CD4-positive, alpha-beta memory T cell (primary cell): ENCODE measurements at regions of chr12 and their contacts with region 1.

Region 1: GRCh38 chr12:76455582-76456345 is 103.8 kb downstream of the OSBPL8 start:
- DNase-seq: peak in 4 of 5 donors; percentile 44 to 56 (median 51)
- H3K4me3 ChIP-seq: no peak overlapping the region
- H3K4me3 Mint-ChIP-seq: no peak overlapping the region
- H3K27ac ChIP-seq: no peak overlapping the region
- H3K27ac Mint-ChIP-seq: peak overlapping the region in 5 of 7 donors; percentile 30 to 88 (median 75)
- H3K4me1 ChIP-seq: peaks cover 42% of the 10 kb centered on the region
- H3K4me1 Mint-ChIP-seq: peaks cover 26 to 55% (median 33%) of the 10 kb centered on the region in 4 donors
- H3K27me3 ChIP-seq: no peaks in the 10 kb centered on the region
- H3K27me3 Mint-ChIP-seq: no peaks in the 10 kb centered on the region

Region 2: GRCh38 chr12:75526655-75527511 is 928.9 kb before region 1 on chr12:
- CTCF ChIA-PET with region 1: interaction called, 24 read pairs
- POLR2A ChIA-PET with region 1: no interaction called
- intact Hi-C with region 1: loop called (anchors 1 kb)
- DNase-seq: peak in 4 of 5 donors; percentile 32 to 42 (median 40)
- H3K4me3 ChIP-seq: no peak overlapping the region
- H3K4me3 Mint-ChIP-seq: no peak overlapping the region
- H3K27ac ChIP-seq: no peak overlapping the region
- H3K27ac Mint-ChIP-seq: no peak overlapping the region
- H3K4me1 ChIP-seq: no peaks in the 10 kb centered on the region
- H3K4me1 Mint-ChIP-seq: peaks cover 0 to 2% (median 0%) of the 10 kb centered on the region in 4 donors
- H3K27me3 ChIP-seq: no peaks in the 10 kb centered on the region
- H3K27me3 Mint-ChIP-seq: peaks cover 5 to 22% of the 10 kb centered on the region in 2 donors

Region 3: GRCh38 chr12:76064904-76065303 is 390.9 kb before region 1 on chr12:
- CTCF ChIA-PET with region 1: no interaction called
- POLR2A ChIA-PET with region 1: no interaction called
- intact Hi-C with region 1: loop called (anchors 5 kb)
- DNase-seq: no peak
- H3K4me3 ChIP-seq: no peak overlapping the region
- H3K4me3 Mint-ChIP-seq: peak overlapping the region in 1 of 8 donors; percentile 46
- H3K27ac ChIP-seq: no peak overlapping the region
- H3K27ac Mint-ChIP-seq: peak overlapping the region in 1 of 7 donors; percentile 23
- H3K4me1 ChIP-seq: peaks cover 6% of the 10 kb centered on the region
- H3K4me1 Mint-ChIP-seq: peaks cover 21 to 39% (median 27%) of the 10 kb centered on the region in 4 donors
- H3K27me3 ChIP-seq: no peaks in the 10 kb centered on the region
- H3K27me3 Mint-ChIP-seq: no peaks in the 10 kb centered on the region

Region 4: DNA sequence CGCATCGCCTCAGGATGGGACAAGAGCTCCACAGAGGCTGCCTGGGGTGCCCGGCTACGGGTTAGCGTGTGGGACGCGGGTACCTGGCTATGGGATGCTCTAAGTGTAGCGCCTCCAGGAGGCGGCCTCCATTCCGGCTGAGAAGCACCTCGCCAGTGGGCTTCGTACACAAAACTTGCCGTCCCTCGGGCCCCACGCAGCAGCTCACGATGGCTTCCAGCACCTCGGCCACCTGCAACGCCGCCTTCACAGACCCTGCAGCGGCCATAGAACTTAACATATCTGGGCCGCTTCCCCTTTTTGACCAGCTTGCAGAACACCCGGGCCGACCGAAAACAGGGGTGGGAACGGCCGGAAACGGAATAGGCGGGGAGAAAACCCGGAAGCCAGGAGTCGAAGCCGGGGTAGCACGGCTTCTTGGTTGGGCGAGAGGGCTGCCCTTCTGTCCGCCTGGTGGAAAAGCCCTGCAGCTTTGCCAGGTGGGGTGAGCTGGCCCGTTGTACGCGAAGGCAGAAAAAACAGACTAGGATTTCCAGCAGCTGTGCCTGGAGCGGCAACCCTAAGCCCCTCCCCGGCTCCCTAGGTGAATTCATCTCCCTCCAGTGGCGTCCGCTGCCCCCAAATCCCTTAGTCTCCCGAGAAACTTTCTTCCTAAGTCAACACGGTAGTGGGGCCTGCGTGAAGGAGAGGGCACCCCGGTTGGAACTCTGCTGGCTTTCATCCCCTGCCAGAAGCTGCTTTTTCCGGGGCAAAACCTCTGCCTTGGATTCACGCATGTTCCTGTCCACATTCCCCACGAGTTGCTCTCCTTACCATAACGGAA is 107.5 kb before region 1 on chr12 and contains the start of gene BBS10:
- CTCF ChIA-PET with region 1: interaction called, 10 read pairs
- POLR2A ChIA-PET with region 1: interaction called, 11 read pairs
- intact Hi-C with region 1: loop called (anchors 5 kb)
- DNase-seq: peak; percentile 83 to 89 (median 85)
- H3K4me3 ChIP-seq: peak within 1 kb of the TSS; percentile 64 to 82
- H3K4me3 Mint-ChIP-seq: peak within 1 kb of the TSS; percentile 95 to 99 (median 96)
- H3K27ac ChIP-seq: peak within 1 kb of the TSS; percentile 63
- H3K27ac Mint-ChIP-seq: peak within 1 kb of the TSS; percentile 90 to 97 (median 94)
- H3K4me1 ChIP-seq: peaks cover 23% of the 10 kb centered on the region
- H3K4me1 Mint-ChIP-seq: peaks cover 13 to 43% (median 23%) of the 10 kb centered on the region in 4 donors
- H3K27me3 ChIP-seq: no peaks in the 10 kb centered on the region
- H3K27me3 Mint-ChIP-seq: no peaks in the 10 kb centered on the region
- total RNA-seq, gene BBS10: 11.5 to 12.6 TPM

Region 5: GRCh38 chr12:76470028-76470939 is 14.5 kb after region 1 on chr12:
- CTCF ChIA-PET with region 1: interaction called, 33 read pairs
- POLR2A ChIA-PET with region 1: no interaction called
- intact Hi-C with region 1: no loop called
- DNase-seq: peak in 1 of 5 donors; percentile 41
- H3K4me3 ChIP-seq: no peak overlapping the region
- H3K4me3 Mint-ChIP-seq: no peak overlapping the region
- H3K27ac ChIP-seq: no peak overlapping the region
- H3K27ac Mint-ChIP-seq: no peak overlapping the region
- H3K4me1 ChIP-seq: peaks cover 24% of the 10 kb centered on the region
- H3K4me1 Mint-ChIP-seq: peaks cover 9 to 17% (median 13%) of the 10 kb centered on the region in 4 donors
- H3K27me3 ChIP-seq: no peaks in the 10 kb centered on the region
- H3K27me3 Mint-ChIP-seq: no peaks in the 10 kb centered on the region

Region 6: DNA sequence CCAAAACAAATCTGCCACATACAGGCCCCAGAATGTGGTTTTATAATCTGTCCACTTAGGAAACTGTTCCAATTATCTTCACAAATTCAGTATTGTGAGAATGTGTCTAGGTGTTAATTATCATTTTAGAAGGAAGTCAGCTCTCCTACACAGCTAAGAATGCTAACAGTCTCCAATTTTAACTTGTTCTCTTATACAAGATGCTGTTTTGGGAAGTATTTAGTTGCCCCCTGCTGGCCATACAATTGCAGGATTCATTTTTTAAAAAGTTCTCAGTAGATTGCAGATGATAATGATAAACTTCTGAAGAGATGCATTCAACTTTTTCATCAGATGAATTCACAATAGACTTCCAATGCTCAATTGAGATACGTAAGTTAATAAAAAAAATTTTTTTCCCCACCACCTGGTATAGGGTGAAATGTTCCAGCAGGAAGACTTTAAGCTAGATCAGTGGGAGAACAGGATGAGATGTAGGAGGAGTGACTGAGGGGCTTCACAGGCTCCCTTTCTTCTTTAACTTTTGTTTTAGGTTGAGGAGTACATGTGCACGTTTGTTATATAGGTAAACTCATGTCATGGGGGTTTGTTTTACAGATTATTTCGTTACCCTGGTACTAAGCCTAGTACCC is 131.1 kb after region 1 on chr12:
- CTCF ChIA-PET with region 1: interaction called, 35 read pairs
- POLR2A ChIA-PET with region 1: no interaction called
- intact Hi-C with region 1: loop called (anchors 2 kb)
- DNase-seq: peak in 4 of 5 donors; percentile 59 to 63 (median 60)
- H3K4me3 ChIP-seq: no peak overlapping the region
- H3K4me3 Mint-ChIP-seq: no peak overlapping the region
- H3K27ac ChIP-seq: no peak overlapping the region
- H3K27ac Mint-ChIP-seq: peak overlapping the region in 2 of 7 donors; percentile 46 to 83
- H3K4me1 ChIP-seq: no peaks in the 10 kb centered on the region
- H3K4me1 Mint-ChIP-seq: peaks cover 0 to 3% (median 0%) of the 10 kb centered on the region in 4 donors
- H3K27me3 ChIP-seq: no peaks in the 10 kb centered on the region
- H3K27me3 Mint-ChIP-seq: no peaks in the 10 kb centered on the region

Region 7: GRCh38 chr12:76688631-76689030 is 232.9 kb after region 1 on chr12:
- CTCF ChIA-PET with region 1: no interaction called
- POLR2A ChIA-PET with region 1: no interaction called
- intact Hi-C with region 1: no loop called
- DNase-seq: no peak
- H3K4me3 ChIP-seq: no peak overlapping the region
- H3K4me3 Mint-ChIP-seq: no peak overlapping the region
- H3K27ac ChIP-seq: no peak overlapping the region
- H3K27ac Mint-ChIP-seq: no peak overlapping the region
- H3K4me1 ChIP-seq: no peaks in the 10 kb centered on the region
- H3K4me1 Mint-ChIP-seq: no peaks in the 10 kb centered on the region
- H3K27me3 ChIP-seq: no peaks in the 10 kb centered on the region
- H3K27me3 Mint-ChIP-seq: peaks cover 0 to 2% of the 10 kb centered on the region in 2 donors